Adrenal gland (tissue), 19 donors: ENCODE measurements at regions of chr15 and their contacts with region 1.

Region 1: GRCh38 chr15:72155635-72156616 is 37.7 kb downstream of the SENP8 start:
- DNase-seq: peak; percentile 82 to 94 (median 87)
- H3K4me3 ChIP-seq: peak overlapping the region in 2 of 4 donors; percentile 31 to 72
- H3K27ac ChIP-seq: peak overlapping the region in 3 of 5 donors; percentile 24 to 47 (median 31)
- H3K4me1 ChIP-seq: peaks cover 6 to 7% of the 10 kb centered on the region in 2 donors
- H3K27me3 ChIP-seq: no peaks in the 10 kb centered on the region
- CTCF ChIP-seq: peak; percentile 68 to 95 (median 89)
- POLR2A ChIP-seq: no peak

Region 2: DNA sequence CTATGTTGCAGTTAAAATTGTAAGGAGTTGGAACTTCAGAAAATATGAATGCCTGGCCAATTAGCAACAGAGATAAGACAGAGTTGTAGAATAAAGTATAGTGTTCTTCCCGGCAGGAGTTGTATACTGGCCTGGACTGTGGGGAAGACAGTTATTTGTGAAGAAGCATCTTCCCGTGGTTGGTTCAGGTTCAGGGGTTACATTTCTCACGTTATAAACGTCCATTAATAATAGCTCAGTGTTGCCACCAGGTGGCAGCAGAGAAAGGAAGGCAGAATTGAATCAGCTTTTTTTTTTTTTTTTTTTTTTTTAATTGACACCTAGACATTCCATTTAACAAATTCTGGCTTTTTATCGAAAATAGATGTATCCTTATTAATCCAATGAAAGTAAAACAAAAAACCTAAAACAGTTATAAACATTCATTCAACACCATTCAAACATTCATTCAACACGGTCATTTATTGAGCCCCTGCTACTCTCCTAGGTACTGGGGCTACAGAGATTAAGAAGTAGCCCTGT is 412.0 kb before region 1 on chr15:
- intact Hi-C with region 1: loop called in 1 of 2 experiments (anchors 10 kb)
- DNase-seq: peak; percentile 50 to 77 (median 67)
- H3K4me3 ChIP-seq: no peak overlapping the region
- H3K27ac ChIP-seq: no peak overlapping the region
- H3K4me1 ChIP-seq: peaks cover 0 to 6% of the 10 kb centered on the region in 2 donors
- H3K27me3 ChIP-seq: no peaks in the 10 kb centered on the region
- CTCF ChIP-seq: peak; percentile 47 to 86 (median 70)
- POLR2A ChIP-seq: no peak

Region 3: GRCh38 chr15:71777216-71777950 is 378.5 kb before region 1 on chr15:
- intact Hi-C with region 1: loop called in 1 of 2 experiments (anchors 10 kb)
- DNase-seq: no peak
- H3K4me3 ChIP-seq: no peak overlapping the region
- H3K27ac ChIP-seq: no peak overlapping the region
- H3K4me1 ChIP-seq: peaks cover 0 to 12% of the 10 kb centered on the region in 2 donors
- H3K27me3 ChIP-seq: no peaks in the 10 kb centered on the region
- CTCF ChIP-seq: no peak
- POLR2A ChIP-seq: no peak

Region 4: DNA sequence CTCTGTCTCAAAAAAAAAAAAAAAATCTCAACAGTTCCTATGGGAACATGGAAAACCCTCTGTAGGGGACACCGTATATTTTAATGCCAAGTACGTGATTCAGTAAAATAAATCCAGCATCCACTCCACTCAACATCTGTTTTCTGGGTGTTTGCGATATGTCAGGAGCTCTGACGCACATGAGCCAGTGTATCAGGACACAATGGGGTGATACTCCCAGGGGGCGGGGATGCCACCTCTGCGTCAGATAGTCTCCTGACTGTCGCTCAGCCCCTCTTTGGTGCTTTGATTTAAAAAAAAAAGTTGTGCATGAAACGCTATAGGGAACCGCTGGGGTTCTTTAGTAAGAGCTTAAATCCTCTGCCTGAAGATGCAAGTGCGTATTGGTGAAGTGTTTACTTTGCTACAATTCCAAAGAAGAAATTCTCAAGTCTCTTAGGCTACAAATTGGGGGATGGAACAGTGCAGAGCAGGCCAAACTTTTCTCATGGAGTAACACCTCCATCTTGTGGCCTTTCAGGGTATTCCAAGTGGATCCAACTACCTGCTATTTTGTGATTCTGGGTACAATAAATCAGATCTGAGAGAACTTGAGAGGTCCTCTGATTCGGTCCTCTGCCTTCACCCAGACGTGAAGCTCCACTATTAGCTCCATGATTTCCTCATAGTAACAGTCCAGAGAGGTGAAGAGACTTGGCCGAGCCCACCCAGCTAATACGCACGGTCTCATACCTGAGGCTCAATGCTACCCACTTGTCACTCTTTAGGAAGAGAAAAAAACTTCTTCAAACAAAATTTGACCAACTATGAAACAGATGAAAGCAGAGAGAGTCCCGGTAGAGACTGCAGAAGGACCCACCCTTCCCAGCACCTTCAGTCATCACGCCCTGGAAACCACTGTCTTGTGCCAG is 354.8 kb before region 1 on chr15:
- intact Hi-C with region 1: loop called in 1 of 2 experiments (anchors 10 kb)
- DNase-seq: peak; percentile 34 to 68 (median 48)
- H3K4me3 ChIP-seq: no peak overlapping the region
- H3K27ac ChIP-seq: no peak overlapping the region
- H3K4me1 ChIP-seq: peaks cover 0 to 2% of the 10 kb centered on the region in 2 donors
- H3K27me3 ChIP-seq: no peaks in the 10 kb centered on the region
- CTCF ChIP-seq: peak; percentile 82 to 94 (median 90)
- POLR2A ChIP-seq: no peak

Region 5: DNA sequence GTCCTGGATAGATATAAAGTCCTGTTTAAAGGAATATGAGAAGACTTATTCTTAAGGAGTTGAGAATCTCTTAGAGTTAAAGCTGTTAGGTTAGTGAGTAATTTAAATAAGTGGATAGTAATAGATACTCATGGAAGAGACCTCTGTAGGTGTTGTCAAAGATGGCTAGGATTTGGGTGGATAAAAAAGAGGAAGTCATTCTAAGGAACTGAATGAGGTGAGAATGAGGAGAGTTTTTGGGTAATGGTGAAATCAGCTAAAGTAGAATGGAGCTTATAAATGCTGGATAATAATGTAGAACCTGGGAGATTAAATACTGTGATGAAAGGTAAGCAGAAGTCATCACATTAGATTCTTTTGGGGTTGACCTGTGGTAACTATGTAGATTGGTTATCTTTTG is 326.3 kb after region 1 on chr15:
- intact Hi-C with region 1: no loop called
- DNase-seq: no peak
- H3K4me3 ChIP-seq: no peak overlapping the region
- H3K27ac ChIP-seq: no peak overlapping the region
- H3K4me1 ChIP-seq: peaks cover 2 to 55% of the 10 kb centered on the region in 2 donors
- H3K27me3 ChIP-seq: no peaks in the 10 kb centered on the region
- CTCF ChIP-seq: no peak
- POLR2A ChIP-seq: no peak